Left cardiac atrium (tissue), 4 donors: ENCODE measurements at regions of chr1 and their contacts with region 1.

Region 1: GRCh38 chr1:193589597-193590040 is 403.2 kb upstream of the B3GALT2 start:
- DNase-seq: no peak
- ATAC-seq: peak; percentile 78 to 84

Region 2: GRCh38 chr1:193190096-193190744 is 399.4 kb before region 1 on chr1:
- intact Hi-C with region 1: loop called in 1 of 2 experiments (anchors 10 kb)
- DNase-seq: no peak
- ATAC-seq: peak in 1 of 2 donors; percentile 36

Region 3: DNA sequence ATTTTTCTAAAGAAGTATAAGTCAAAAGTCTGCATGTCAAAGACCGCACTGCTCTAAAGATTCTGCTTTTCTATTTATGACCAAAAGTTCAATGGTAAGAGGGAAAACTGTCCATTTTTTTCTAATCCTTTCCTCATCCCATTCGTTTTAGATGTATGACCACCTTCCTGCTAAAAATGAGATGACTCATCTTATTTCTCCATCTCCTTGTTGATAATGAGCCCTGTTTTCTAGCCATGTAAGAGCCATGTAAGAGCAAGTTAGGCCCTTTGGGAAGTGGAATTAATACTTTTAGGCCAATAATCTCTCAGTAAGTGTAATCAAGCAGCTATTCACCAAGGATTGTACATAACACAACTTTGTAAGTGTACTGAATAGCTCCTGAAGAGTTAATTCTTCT is 72.4 kb after region 1 on chr1:
- intact Hi-C with region 1: no loop called
- DNase-seq: no peak
- ATAC-seq: no peak